IMR-90 (cell line): ENCODE measurements at regions of chr12 and their contacts with region 1.

Region 1: DNA sequence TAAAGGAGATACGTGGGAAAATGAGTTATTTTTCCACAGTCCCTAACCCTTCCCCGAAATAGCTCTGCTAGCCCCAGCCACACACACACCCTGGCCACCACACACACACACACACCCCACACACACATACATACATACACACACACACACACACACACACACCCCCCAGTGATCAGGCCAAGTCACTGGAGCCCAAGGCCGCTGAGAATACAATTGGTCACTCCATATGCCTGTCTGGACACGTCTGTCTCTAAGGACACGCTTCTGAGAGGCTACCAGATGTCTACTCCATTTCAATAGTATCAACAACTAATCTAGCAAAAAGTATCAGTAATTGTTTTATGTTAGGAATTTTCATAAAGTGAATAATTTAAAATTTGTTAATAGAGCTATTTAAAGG is 13.0 kb upstream of the DIABLO start:
- DNase-seq: no peak
- ATAC-seq: no peak
- H3K4me3 ChIP-seq: no peak overlapping the region
- H3K27ac ChIP-seq: no peak overlapping the region
- H3K4me1 ChIP-seq: no peaks in the 10 kb centered on the region
- H3K27me3 ChIP-seq: no peaks in the 10 kb centered on the region
- CTCF ChIP-seq: no peak
- POLR2A ChIP-seq: no peak
- RAD21 ChIP-seq: no peak

Region 2: GRCh38 chr12:122208073-122208820 is 30.6 kb before region 1 on chr12:
- CTCF ChIA-PET with region 1: no interaction called
- POLR2A ChIA-PET with region 1: interaction called, 10 read pairs
- dilution Hi-C with region 1: no loop called
- in situ Hi-C with region 1: no loop called
- intact Hi-C with region 1: no loop called
- DNase-seq: no peak
- ATAC-seq: no peak
- H3K4me3 ChIP-seq: no peak overlapping the region
- H3K27ac ChIP-seq: no peak overlapping the region
- H3K4me1 ChIP-seq: no peaks in the 10 kb centered on the region
- H3K27me3 ChIP-seq: peaks cover 20% of the 10 kb centered on the region
- CTCF ChIP-seq: no peak
- POLR2A ChIP-seq: no peak
- RAD21 ChIP-seq: no peak